GM12878 (cell line): ENCODE measurements at regions of chr22 and their contacts with region 1.

Region 1: DNA sequence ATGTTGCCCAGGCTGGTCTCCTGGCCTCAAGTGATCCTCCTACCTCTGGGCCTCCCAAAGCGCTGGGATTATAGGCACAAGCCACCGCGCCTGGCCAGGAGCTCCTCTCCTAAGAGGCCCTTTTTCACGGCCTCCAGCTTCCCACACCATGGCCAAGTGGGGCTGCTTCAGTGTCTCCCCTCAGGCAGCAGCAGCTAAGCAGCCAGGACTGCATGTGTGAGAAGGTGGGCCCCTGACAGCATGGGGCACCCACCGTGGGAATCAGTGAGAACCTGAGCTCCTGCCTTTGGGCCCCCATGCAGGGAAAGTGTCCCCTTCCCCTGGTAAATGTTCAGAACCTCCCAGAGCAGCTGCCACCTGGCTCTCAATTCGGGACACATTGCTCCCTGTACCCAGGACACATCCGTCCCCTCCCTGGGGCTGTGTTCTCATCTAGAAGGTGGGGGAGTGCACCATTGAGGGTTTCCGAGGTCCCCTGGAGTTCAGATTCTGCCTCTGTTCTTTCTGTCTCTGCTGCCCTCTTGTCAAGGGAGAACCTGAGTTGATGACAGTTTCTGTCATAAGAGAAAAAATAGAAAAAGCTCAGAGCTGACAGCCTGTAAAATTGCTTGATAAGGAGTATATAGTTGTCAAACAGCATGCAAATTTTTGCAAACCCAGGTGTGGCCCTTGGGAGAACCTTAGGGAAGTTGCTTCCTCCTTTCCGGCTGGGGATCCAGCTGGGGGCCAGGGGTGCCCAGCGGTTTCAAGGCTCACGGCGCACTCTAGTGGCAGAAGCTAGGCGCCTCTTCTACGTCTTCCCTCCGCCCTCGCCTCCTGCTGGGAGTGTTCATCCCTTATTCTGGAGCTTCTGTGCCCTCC is 29.7 kb downstream of the FAM83F start:
- DNase-seq: no peak
- ATAC-seq: peak; percentile 92
- H3K4me3 ChIP-seq: no peak overlapping the region
- H3K27ac ChIP-seq: no peak overlapping the region
- H3K4me1 ChIP-seq: no peaks in the 10 kb centered on the region
- H3K27me3 ChIP-seq: peaks cover 0 to 1% of the 10 kb centered on the region in 2 experiments; a peak in 2 of 4 replicates
- CTCF ChIP-seq: peak; percentile 90 to 97 (median 92); a peak in 5 of 6 replicates
- EP300 ChIP-seq: no peak; a peak in 1 of 4 replicates
- POLR2A ChIP-seq: no peak
- RAD21 ChIP-seq: peak; percentile 95

Region 2: GRCh38 chr22:39537975-39538374 is 486.5 kb before region 1 on chr22:
- CTCF ChIA-PET with region 1: interaction called, 157 read pairs
- POLR2A ChIA-PET with region 1: interaction called, 3 read pairs
- RAD21 ChIA-PET with region 1: interaction called, 48 read pairs
- SMC1A ChIA-PET with region 1: interaction called, 31 read pairs
- in situ Hi-C with region 1: loop called (anchors 5 kb)
- intact Hi-C with region 1: loop called (anchors 5 kb)
- DNase-seq: no peak
- ATAC-seq: no peak
- H3K4me3 ChIP-seq: no peak overlapping the region
- H3K27ac ChIP-seq: no peak overlapping the region
- H3K4me1 ChIP-seq: no peaks in the 10 kb centered on the region
- H3K27me3 ChIP-seq: no peaks in the 10 kb centered on the region
- CTCF ChIP-seq: no peak
- EP300 ChIP-seq: no peak
- POLR2A ChIP-seq: no peak
- RAD21 ChIP-seq: no peak

Region 3: DNA sequence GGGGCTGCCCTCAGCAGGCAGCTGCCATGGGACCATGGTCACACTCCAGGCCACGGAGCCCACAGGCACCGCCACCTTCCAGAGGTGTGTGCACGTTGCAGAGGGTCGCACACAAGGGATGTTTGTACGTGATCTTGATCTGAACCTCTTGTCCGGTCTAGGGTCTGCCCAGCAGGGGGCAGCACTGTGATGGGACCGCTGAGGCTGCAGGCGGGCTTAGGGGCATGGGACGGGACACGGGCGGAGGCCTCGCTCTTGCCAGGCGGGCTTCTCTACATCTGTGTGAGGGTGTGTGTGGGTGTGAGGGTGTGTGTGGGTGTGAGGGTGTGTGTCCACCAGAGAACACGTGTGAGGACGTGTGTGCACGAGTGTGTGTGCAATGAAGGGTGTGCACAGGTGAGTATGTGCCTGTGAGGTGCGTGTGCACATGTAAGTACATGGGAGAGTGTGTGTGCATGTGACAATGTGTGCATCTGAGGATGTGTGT is 401.5 kb before region 1 on chr22:
- CTCF ChIA-PET with region 1: interaction called, 23 read pairs
- POLR2A ChIA-PET with region 1: no interaction called
- RAD21 ChIA-PET with region 1: interaction called, 12 read pairs
- SMC1A ChIA-PET with region 1: interaction called, 14 read pairs
- in situ Hi-C with region 1: no loop called
- intact Hi-C with region 1: loop called (anchors 1 kb)
- DNase-seq: no peak
- ATAC-seq: peak; percentile 86
- H3K4me3 ChIP-seq: no peak overlapping the region
- H3K27ac ChIP-seq: no peak overlapping the region
- H3K4me1 ChIP-seq: no peaks in the 10 kb centered on the region; the same call in 1 of the 2 replicates
- H3K27me3 ChIP-seq: peaks cover 0 to 1% of the 10 kb centered on the region in 2 experiments; a peak in 2 of 4 replicates
- CTCF ChIP-seq: peak; percentile 66 to 75 (median 75)
- EP300 ChIP-seq: no peak
- POLR2A ChIP-seq: no peak
- RAD21 ChIP-seq: peak; percentile 84

Region 4: GRCh38 chr22:39927544-39927943 is 96.9 kb before region 1 on chr22:
- CTCF ChIA-PET with region 1: interaction called, 25 read pairs
- POLR2A ChIA-PET with region 1: no interaction called
- RAD21 ChIA-PET with region 1: interaction called, 34 read pairs
- SMC1A ChIA-PET with region 1: interaction called, 23 read pairs
- in situ Hi-C with region 1: no loop called
- intact Hi-C with region 1: loop called (anchors 10 kb)
- DNase-seq: no peak
- ATAC-seq: no peak
- H3K4me3 ChIP-seq: no peak overlapping the region
- H3K27ac ChIP-seq: no peak overlapping the region; the same call in 1 of the 2 replicates
- H3K4me1 ChIP-seq: peaks cover 22% of the 10 kb centered on the region
- H3K27me3 ChIP-seq: no peaks in the 10 kb centered on the region
- CTCF ChIP-seq: peak in 2 of 3 experiments; percentile 12 to 18; a peak in 1 of 6 replicates
- EP300 ChIP-seq: no peak
- POLR2A ChIP-seq: no peak
- RAD21 ChIP-seq: no peak

Region 5: DNA sequence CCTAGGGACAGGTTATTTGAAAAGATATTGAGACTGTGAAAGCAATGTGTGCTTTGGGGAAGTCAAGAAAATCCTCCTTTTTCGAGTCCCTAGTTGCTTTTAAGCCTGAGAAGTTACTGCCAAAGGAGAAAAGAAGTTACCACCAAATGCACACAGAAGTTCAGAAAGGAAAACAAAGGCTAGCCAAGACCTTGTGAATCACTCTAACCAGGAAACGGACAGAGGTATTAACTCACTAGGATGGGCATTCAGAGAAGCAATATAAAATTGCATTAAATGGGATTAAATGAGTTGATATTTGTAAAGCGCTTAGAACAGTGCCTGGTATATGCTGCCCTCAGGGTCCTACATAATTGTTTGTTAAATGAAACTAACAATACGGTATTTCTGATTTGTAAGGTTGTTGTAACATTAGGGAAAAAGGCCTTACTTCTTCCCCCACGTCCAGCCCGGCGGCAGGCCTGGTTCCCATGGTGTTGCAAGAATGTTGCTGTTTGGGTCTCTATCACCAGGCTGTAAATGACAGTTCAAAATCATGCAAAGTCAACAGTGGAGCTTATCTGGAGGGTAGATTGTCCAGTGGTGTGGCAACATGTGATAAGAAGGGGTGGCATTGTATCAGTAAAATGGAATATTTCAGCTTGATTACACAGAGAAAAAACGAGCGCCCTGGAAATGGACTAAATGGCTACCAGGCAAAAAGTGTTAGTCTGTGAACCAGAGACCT is 57.2 kb before region 1 on chr22:
- CTCF ChIA-PET with region 1: interaction called, 6 read pairs
- POLR2A ChIA-PET with region 1: no interaction called
- RAD21 ChIA-PET with region 1: no interaction called
- SMC1A ChIA-PET with region 1: interaction called, 10 read pairs
- in situ Hi-C with region 1: no loop called
- intact Hi-C with region 1: no loop called
- DNase-seq: no peak
- ATAC-seq: no peak
- H3K4me3 ChIP-seq: no peak overlapping the region
- H3K27ac ChIP-seq: no peak overlapping the region
- H3K4me1 ChIP-seq: peaks cover 12% of the 10 kb centered on the region
- H3K27me3 ChIP-seq: no peaks in the 10 kb centered on the region
- CTCF ChIP-seq: no peak
- EP300 ChIP-seq: no peak
- POLR2A ChIP-seq: no peak
- RAD21 ChIP-seq: no peak

Region 6: GRCh38 chr22:40009292-40009769 is 15.1 kb before region 1 on chr22:
- CTCF ChIA-PET with region 1: interaction called, 15 read pairs
- POLR2A ChIA-PET with region 1: interaction called, 5 read pairs
- RAD21 ChIA-PET with region 1: no interaction called
- SMC1A ChIA-PET with region 1: interaction called, 5 read pairs
- in situ Hi-C with region 1: no loop called
- intact Hi-C with region 1: no loop called
- DNase-seq: no peak
- ATAC-seq: no peak
- H3K4me3 ChIP-seq: no peak overlapping the region
- H3K27ac ChIP-seq: no peak overlapping the region
- H3K4me1 ChIP-seq: no peaks in the 10 kb centered on the region
- H3K27me3 ChIP-seq: peaks cover 4 to 11% of the 10 kb centered on the region in 2 experiments
- CTCF ChIP-seq: no peak
- EP300 ChIP-seq: no peak
- POLR2A ChIP-seq: no peak
- RAD21 ChIP-seq: no peak

Region 7: GRCh38 chr22:40346178-40347118 is 322.0 kb after region 1 on chr22 and contains the start of gene ADSL:
- CTCF ChIA-PET with region 1: interaction called, 33 read pairs
- POLR2A ChIA-PET with region 1: interaction called, 3 read pairs
- RAD21 ChIA-PET with region 1: interaction called, 9 read pairs
- SMC1A ChIA-PET with region 1: interaction called, 22 read pairs
- in situ Hi-C with region 1: no loop called
- intact Hi-C with region 1: no loop called
- DNase-seq: peak; percentile 41
- ATAC-seq: peak; percentile 95
- H3K4me3 ChIP-seq: peak within 1 kb of the TSS; percentile 81
- H3K27ac ChIP-seq: peak within 1 kb of the TSS; percentile 92
- H3K4me1 ChIP-seq: 0 out of 2 replicates have a peak, but pooled peaks cover 3% of the 10 kb centered on the region
- H3K27me3 ChIP-seq: no peaks in the 10 kb centered on the region
- CTCF ChIP-seq: no peak
- EP300 ChIP-seq: no peak
- POLR2A ChIP-seq: peak; percentile 99
- RAD21 ChIP-seq: no peak
- polyA plus RNA-seq, gene ADSL: 230 to 313 TPM

Region 8: GRCh38 chr22:41146573-41146972 is 1122.1 kb after region 1 on chr22:
- CTCF ChIA-PET with region 1: no interaction called
- POLR2A ChIA-PET with region 1: no interaction called
- RAD21 ChIA-PET with region 1: no interaction called
- SMC1A ChIA-PET with region 1: no interaction called
- in situ Hi-C with region 1: no loop called
- intact Hi-C with region 1: no loop called
- DNase-seq: no peak
- ATAC-seq: no peak
- H3K4me3 ChIP-seq: no peak overlapping the region
- H3K27ac ChIP-seq: no peak overlapping the region
- H3K4me1 ChIP-seq: no peaks in the 10 kb centered on the region
- H3K27me3 ChIP-seq: no peaks in the 10 kb centered on the region
- CTCF ChIP-seq: no peak
- EP300 ChIP-seq: no peak
- POLR2A ChIP-seq: no peak
- RAD21 ChIP-seq: no peak